Activated T-helper 1 cell treated with anti-CD3 and anti-CD28 coated beads, Interleukin-12 subunit alpha, Interleukin-12 subunit beta, Interleukin-2, Interleukin-4 antibody, amounts not matched to agents 30 ng/mL and 10 ng/mL and 1 ng/mL, durations not matched to agents 14 hours and 24 hours and 36 hours (primary cell): ENCODE measurements at regions of chr12 and their contacts with region 1.

Region 1: DNA sequence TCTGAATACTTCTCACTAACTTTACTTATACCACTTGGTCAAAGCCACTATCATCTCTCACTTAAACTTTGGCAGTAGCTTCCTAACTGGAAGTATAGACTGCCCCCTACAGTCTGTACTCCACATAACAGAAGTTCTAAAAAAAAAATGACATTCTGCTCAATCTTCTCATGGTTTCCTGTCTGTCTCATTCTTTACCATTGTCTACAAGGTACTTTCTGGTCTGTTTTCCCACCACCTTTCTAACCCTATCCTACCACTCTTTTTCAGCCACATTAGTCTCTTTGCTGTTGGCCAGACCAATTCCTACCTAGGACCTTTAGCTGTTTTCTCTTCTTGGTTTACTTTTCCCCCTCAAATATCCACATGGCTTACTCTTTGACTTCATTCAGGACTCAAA is 14.7 kb downstream of the CPSF6 start:
- DNase-seq: no peak
- H3K4me3 Mint-ChIP-seq: no peak overlapping the region
- H3K27ac Mint-ChIP-seq: peak overlapping the region; percentile 52
- H3K4me1 Mint-ChIP-seq: peaks cover 41% of the 10 kb centered on the region
- H3K27me3 Mint-ChIP-seq: no peaks in the 10 kb centered on the region

Region 2: GRCh38 chr12:68745904-68746571 is 508.0 kb before region 1 on chr12 and contains the start of gene SLC35E3:
- intact Hi-C with region 1: loop called (anchors 5 kb)
- DNase-seq: peak; percentile 91
- H3K4me3 Mint-ChIP-seq: peak within 1 kb of the TSS; percentile 94
- H3K27ac Mint-ChIP-seq: peak within 1 kb of the TSS; percentile 87
- H3K4me1 Mint-ChIP-seq: peaks cover 50% of the 10 kb centered on the region
- H3K27me3 Mint-ChIP-seq: no peaks in the 10 kb centered on the region
- total RNA-seq, gene SLC35E3: 5.9 and 6.3 TPM in 2 replicates

Region 3: GRCh38 chr12:68863109-68863770 is 390.8 kb before region 1 on chr12:
- intact Hi-C with region 1: loop called (anchors 5 kb)
- DNase-seq: no peak
- H3K4me3 Mint-ChIP-seq: no peak overlapping the region
- H3K27ac Mint-ChIP-seq: no peak overlapping the region
- H3K4me1 Mint-ChIP-seq: peaks cover 18% of the 10 kb centered on the region
- H3K27me3 Mint-ChIP-seq: no peaks in the 10 kb centered on the region